Activated CD4-positive, alpha-beta memory T cell treated with anti-CD3 and anti-CD28 coated beads, Interleukin-2, amount 10 ng/mL, durations not matched to agents 7 days and 5 days (primary cell): ENCODE measurements at regions of chr10 and their contacts with region 1.

Region 1: DNA sequence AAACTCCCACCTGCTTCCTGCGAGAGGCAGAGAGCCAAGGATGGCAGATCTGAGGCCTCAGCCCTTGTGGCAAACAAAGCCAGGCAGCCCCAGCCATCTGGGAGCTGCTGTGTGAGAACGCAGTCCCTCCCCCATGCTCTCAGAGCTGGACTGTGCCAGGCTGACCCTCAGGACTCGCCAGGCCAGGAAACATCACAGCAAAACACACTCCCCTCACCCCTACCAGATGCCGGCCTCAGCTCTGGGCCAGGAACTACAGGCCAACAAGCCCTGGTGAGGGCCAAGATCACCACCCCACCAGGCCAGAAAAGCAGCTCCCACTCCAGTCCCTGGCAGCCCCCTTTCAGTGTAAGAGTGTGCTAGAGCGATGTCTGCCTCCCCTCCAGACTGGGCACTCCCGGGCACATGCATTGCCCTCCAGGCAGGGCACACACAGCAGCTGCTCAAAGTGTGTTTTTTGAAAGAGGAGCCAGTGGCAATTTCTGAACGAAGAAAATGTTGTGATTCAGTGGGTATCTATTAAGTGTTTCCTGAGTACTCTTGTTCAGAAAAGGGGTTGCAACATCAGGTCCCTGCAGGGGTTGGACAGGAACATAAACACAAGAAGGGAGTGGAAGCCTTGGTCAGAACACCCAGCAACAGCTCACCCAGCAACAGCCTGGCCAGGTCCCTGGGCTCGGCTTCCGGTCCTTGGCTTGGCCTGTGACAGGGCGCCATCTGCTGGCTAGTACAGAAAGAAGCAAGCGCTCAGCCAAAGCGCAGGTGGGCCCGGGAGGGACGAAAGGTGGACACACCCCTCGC is 18.3 kb downstream of the LRRC20 start:
- DNase-seq: peak; percentile 88
- H3K4me3 Mint-ChIP-seq: no peak overlapping the region
- H3K27ac Mint-ChIP-seq: no peak overlapping the region
- H3K4me1 Mint-ChIP-seq: peaks cover 11% of the 10 kb centered on the region
- H3K27me3 Mint-ChIP-seq: no peaks in the 10 kb centered on the region

Region 2: DNA sequence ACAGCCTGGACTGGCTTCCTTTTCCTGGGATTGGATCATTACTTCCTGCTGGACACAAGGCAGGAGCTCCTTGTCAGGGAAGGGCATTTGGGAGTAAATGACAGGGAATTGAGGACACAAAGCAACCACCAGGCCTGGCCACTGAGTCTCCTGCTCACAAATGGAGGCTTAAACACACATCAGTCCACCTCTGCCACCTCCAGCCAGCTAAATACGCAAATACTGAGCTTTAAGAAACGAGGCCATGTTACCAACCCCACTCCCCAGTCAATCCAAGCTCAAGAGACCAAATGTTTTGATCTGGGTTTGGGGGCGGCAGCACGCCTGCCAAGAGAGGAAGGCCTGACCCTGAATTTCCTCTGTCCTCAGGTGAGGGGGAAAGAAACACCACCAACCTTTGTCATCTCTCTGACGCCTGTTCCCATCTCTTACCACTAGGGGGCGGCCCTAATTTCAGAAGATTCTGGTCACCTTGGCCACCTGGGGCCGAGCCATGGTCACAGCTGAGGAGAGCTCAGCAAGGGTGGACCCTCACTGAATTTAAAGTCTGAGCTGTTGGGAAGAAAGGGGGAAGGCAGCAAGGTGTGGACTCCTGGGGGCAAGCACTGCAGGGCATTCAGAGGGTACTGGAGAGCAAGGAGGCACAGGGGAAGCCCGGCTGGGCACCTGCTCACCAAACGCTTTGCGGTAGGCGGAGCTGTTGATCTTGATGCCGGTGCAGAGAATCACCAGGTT is 248.1 kb before region 1 on chr10:
- CTCF ChIA-PET with region 1: interaction called, 23 read pairs
- POLR2A ChIA-PET with region 1: no interaction called
- DNase-seq: peak; percentile 56
- H3K4me3 Mint-ChIP-seq: no peak overlapping the region
- H3K27ac Mint-ChIP-seq: no peak overlapping the region
- H3K4me1 Mint-ChIP-seq: peaks cover 3% of the 10 kb centered on the region
- H3K27me3 Mint-ChIP-seq: no peaks in the 10 kb centered on the region

Region 3: GRCh38 chr10:70227548-70228320 is 136.4 kb before region 1 on chr10:
- CTCF ChIA-PET with region 1: interaction called, 313 read pairs
- POLR2A ChIA-PET with region 1: interaction called, 23 read pairs
- DNase-seq: no peak
- H3K4me3 Mint-ChIP-seq: no peak overlapping the region
- H3K27ac Mint-ChIP-seq: peak overlapping the region; percentile 42
- H3K4me1 Mint-ChIP-seq: peaks cover 65% of the 10 kb centered on the region
- H3K27me3 Mint-ChIP-seq: no peaks in the 10 kb centered on the region

Region 4: GRCh38 chr10:70233109-70233938 is 130.8 kb before region 1 on chr10 and contains the start of gene PPA1:
- CTCF ChIA-PET with region 1: interaction called, 313 read pairs
- POLR2A ChIA-PET with region 1: interaction called, 16 read pairs
- DNase-seq: peak; percentile 99
- H3K4me3 Mint-ChIP-seq: peak within 1 kb of the TSS; percentile 80
- H3K27ac Mint-ChIP-seq: peak within 1 kb of the TSS; percentile 73
- H3K4me1 Mint-ChIP-seq: peaks cover 42% of the 10 kb centered on the region
- H3K27me3 Mint-ChIP-seq: no peaks in the 10 kb centered on the region
- total RNA-seq, gene PPA1: 155 to 158 TPM

Region 5: DNA sequence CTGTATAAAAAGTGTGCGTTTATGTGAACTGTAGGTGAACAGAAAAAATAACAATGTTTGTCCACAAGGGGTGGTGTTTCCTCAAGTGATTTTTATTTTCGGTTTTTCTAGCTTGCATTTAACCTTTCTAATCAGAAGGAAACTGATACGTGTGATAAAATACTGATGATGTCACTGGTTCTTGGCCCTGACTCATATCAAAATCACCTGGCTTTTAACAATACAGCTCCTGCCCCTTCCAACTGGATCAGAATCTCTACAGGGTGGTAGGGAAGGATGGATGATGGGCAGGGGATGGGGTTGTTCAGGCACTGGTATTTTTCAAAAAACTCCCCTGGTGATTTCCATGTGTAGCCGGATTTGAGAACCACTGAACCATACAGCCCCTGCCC is 91.2 kb before region 1 on chr10:
- CTCF ChIA-PET with region 1: interaction called, 25 read pairs
- POLR2A ChIA-PET with region 1: no interaction called
- DNase-seq: no peak
- H3K4me3 Mint-ChIP-seq: no peak overlapping the region
- H3K27ac Mint-ChIP-seq: no peak overlapping the region
- H3K4me1 Mint-ChIP-seq: peaks cover 26% of the 10 kb centered on the region
- H3K27me3 Mint-ChIP-seq: peaks cover 2% of the 10 kb centered on the region

Region 6: DNA sequence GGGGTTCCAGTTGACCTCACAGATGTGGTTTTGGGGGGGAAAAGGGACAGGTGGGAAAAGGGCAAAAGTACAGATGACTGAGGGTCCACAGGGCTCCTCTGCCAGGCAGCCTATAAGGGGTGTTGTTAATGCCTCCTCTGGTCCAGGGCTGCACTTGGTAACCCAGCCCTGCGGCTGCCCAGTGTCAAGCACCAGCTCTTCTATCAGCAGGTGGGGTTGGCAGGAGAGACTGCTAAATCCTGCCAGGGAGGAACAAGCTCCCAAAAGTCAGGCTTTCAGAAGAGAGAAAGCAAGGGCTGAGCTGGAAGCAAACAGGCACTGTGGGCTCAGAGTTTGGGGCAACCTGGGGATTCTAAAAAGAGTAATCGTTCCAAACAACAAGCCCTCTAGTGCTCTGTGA is 20.9 kb before region 1 on chr10:
- CTCF ChIA-PET with region 1: interaction called, 10 read pairs
- POLR2A ChIA-PET with region 1: interaction called, 3 read pairs
- DNase-seq: no peak
- H3K4me3 Mint-ChIP-seq: no peak overlapping the region
- H3K27ac Mint-ChIP-seq: no peak overlapping the region
- H3K4me1 Mint-ChIP-seq: no peaks in the 10 kb centered on the region
- H3K27me3 Mint-ChIP-seq: no peaks in the 10 kb centered on the region

Region 7: DNA sequence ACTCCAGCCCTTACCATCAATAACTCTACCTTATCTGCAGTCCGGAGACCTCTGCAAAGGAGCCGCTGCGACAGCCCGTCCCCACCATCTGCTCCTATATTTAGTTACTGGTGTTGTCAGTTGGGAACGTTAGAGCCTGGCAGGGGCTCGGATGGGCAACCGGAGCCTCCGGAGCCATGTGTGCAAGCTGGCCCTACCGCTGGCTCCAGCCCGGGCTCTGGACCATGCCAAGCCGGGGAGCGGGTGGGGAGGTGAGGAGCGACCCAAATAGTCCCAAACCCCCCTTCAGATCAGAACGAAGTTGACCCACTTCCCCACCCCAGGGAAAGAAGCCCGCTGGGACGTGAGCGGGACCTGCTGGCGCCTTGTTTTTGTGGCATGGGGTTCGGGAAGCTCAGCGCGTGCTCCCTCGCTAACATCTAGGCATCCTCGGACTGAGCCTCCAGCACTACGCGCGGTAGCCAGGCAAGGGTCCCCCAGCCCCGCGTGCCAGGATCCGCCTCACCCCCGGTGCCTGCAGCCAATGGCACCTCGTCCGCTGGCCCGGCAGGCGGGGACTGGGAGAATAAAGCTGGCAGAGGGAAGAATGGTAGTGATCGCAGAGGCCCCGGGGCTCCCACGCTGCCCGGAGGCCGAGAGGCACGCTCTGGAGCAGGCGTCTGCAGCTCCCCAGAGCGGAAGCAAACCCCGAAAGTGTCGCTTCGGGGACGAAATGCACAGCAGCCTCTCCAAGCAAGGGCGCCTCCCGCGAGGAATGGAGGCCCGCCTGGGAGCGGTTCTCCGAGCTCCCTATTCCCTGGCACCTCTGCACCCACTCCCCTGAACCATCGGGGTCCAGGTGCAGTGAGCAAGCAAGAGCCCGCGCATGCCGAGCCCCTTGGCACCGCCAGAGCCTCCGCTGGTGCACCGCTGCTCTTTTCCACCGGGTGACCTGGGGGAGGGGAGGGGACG is 17.6 kb after region 1 on chr10:
- CTCF ChIA-PET with region 1: interaction called, 23 read pairs
- POLR2A ChIA-PET with region 1: no interaction called
- DNase-seq: peak; percentile 51
- H3K4me3 Mint-ChIP-seq: peak overlapping the region; percentile 83
- H3K27ac Mint-ChIP-seq: no peak overlapping the region
- H3K4me1 Mint-ChIP-seq: peaks cover 16% of the 10 kb centered on the region
- H3K27me3 Mint-ChIP-seq: no peaks in the 10 kb centered on the region

Region 8: DNA sequence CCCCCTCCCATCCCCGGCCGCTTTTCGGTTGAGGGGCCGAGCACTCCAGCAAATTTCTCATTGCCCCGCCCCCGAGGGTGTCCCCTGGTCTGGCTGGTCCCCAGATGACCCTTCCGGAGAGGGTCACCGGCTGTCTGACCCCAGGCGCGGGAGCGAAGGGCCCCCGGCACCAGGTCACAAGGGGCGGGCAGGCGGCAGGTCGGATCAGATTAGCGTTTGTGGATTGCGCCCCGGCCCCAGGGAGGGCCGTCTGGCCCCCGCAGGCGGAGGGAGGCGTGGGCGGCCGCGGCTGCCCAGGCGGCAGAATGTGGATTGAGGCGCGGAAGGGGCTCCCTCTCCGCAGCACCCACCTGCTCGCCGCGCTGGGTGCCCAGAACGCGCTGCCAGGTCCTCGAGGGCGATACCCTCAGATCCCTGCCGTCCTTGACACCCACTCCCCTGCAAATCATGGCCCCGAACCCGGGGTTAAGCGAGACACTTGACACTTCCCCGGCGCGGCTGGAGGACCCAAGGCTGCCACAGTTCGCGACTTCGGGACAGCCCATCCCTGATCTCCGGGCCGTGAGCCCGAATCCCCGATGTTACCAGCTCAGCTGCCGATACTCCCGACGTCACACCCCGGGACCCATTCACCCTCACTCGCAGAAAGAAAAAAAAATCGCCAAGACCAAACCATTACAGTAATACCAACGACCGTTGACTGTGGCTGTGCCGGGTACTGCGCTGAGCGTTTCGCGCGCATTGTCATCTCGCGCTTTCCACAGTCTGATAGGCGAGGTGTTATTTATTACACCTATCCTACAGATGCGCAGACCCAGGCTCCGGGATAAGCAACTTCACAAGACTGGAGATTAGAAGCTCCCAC is 76.4 kb after region 1 on chr10:
- CTCF ChIA-PET with region 1: no interaction called
- POLR2A ChIA-PET with region 1: no interaction called
- DNase-seq: no peak
- H3K4me3 Mint-ChIP-seq: peak overlapping the region; percentile 1
- H3K27ac Mint-ChIP-seq: no peak overlapping the region
- H3K4me1 Mint-ChIP-seq: peaks cover 15% of the 10 kb centered on the region
- H3K27me3 Mint-ChIP-seq: peaks cover 60% of the 10 kb centered on the region